HCT116 (cell line): ENCODE measurements at regions of chr1 and their contacts with region 1.

Region 1: GRCh38 chr1:108679582-108680213 is 12.4 kb upstream of the PRPF38B start:
- DNase-seq: no peak
- ATAC-seq: no peak
- H3K4me3 ChIP-seq: no peak overlapping the region
- H3K27ac ChIP-seq: no peak overlapping the region
- H3K4me1 ChIP-seq: no peaks in the 10 kb centered on the region
- H3K27me3 ChIP-seq: no peaks in the 10 kb centered on the region
- CTCF ChIP-seq: no peak
- POLR2A ChIP-seq: no peak
- RAD21 ChIP-seq: no peak

Region 2: DNA sequence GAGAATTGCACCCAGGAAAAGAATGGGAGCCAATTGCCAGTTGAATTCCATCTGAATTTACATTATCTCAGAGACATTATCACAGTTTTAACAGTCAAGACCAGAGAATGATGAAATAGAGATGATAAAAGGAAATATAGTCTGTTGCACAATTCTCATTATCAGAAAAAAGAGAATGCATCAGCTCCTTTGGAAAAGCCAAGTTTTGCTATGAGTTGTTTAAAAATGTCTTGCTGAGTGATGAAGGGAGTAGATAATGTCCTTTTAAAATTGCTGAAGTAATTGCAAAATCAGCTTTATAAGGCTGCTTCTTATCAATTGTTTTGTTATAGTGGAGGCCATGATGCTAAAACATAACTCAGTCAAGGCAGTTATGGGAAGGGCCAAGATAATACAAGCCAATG is 157.7 kb before region 1 on chr1:
- CTCF ChIA-PET with region 1: no interaction called
- POLR2A ChIA-PET with region 1: no interaction called
- RAD21 ChIA-PET with region 1: no interaction called
- intact Hi-C with region 1: no loop called
- DNase-seq: no peak
- ATAC-seq: no peak
- H3K4me3 ChIP-seq: no peak overlapping the region
- H3K27ac ChIP-seq: no peak overlapping the region
- H3K4me1 ChIP-seq: no peaks in the 10 kb centered on the region
- H3K27me3 ChIP-seq: no peaks in the 10 kb centered on the region
- CTCF ChIP-seq: no peak
- POLR2A ChIP-seq: no peak
- RAD21 ChIP-seq: no peak

Region 3: DNA sequence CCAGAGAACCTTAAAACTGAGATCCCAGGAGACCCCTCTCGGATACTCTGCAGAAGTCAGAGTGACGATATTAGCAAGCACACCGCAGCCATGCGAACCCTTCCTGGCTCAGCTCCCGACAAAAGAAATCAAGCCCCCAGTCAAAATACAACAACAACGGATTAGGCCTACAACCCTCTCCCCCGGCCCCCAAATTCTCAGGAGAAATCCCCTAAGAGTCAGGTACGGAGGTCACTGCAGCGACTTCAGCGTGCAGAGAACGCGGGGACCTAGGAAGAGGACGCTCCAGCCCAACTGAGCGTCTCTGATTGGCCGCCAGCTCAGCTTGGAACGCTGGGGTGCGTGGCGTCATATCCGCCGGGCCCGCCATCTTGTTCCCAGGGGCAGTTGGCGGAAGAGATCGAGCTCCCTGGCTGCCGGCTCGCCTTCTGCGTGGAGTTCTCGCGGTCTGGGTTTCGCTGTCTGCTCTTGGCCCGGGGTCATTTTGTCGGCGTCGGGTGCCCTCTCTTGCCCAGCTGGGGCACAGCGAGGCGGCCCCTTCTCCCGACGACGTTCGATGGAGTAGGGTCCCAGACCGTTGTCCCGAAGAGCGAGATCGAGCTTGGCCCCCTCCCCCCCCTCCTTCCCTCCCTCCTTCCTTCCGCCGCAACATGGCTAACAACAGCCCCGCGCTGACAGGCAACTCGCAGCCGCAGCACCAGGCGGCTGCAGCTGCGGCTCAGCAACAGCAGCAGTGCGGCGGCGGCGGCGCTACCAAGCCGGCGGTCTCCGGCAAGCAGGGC is 12.4 kb after region 1 on chr1 and contains the start of gene PRPF38B:
- CTCF ChIA-PET with region 1: no interaction called
- POLR2A ChIA-PET with region 1: interaction called, 17 read pairs
- RAD21 ChIA-PET with region 1: no interaction called
- intact Hi-C with region 1: no loop called
- DNase-seq: peak; percentile 82
- ATAC-seq: peak; percentile 91
- H3K4me3 ChIP-seq: peak within 1 kb of the TSS; percentile 82 to 83
- H3K27ac ChIP-seq: peak within 1 kb of the TSS; percentile 92
- H3K4me1 ChIP-seq: peaks cover 11 to 23% of the 10 kb centered on the region in 2 experiments; a peak in 3 of 4 replicates
- H3K27me3 ChIP-seq: no peaks in the 10 kb centered on the region
- CTCF ChIP-seq: no peak
- POLR2A ChIP-seq: peak; percentile 84
- RAD21 ChIP-seq: no peak
- total RNA-seq, gene PRPF38B: 46.4 TPM